SK-N-SH (cell line): ENCODE measurements at regions of chr7 and their contacts with region 1.

Region 1: DNA sequence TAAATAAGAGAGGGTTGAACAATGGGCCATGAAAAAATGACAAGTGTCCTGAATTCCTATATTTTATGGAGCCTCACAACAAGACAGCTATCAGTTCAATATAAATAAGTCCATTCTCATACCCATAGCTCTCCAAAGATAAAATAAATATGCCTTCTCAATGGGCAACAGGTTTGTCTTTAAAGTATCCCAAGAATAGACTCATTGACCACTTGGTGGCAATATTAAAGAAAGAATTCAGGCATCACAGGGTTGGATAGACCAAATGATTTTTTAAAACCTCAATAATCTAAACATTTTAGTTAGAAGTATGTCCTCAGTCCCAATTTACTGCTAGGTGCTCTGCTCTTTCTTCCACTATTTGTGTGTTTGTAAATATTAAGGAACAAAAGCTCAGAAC is 165.1 kb upstream of the WNT16 start:
- DNase-seq: no peak
- H3K4me3 ChIP-seq: no peak overlapping the region
- H3K27ac ChIP-seq: no peak overlapping the region
- H3K4me1 ChIP-seq: peaks cover 0 to 18% of the 10 kb centered on the region in 2 experiments; a peak in 2 of 4 replicates
- H3K27me3 ChIP-seq: no peaks in the 10 kb centered on the region
- CTCF ChIP-seq: no peak
- EP300 ChIP-seq: no peak
- RAD21 ChIP-seq: peak; percentile 45

Region 2: DNA sequence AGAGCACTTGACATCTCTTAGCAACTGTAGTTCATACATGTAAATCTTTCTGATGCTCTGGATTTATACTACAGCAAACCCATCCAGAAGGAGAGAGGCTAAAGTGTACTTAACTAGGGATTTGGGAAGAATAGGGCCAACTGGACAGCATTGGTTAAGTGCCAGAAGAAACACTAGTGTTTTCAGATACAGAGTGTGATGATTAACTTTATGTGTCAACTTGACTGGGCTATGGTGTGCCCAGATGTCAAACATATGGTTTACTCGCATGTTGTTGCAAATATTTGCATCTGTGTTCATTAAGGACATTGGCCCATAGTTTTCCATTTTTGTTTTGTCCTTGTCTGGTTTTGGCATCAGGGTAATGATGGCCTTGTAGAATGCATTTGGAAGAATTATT is 1275.4 kb before region 1 on chr7:
- CTCF ChIA-PET with region 1: no interaction called
- POLR2A ChIA-PET with region 1: no interaction called
- DNase-seq: no peak
- H3K4me3 ChIP-seq: no peak overlapping the region
- H3K27ac ChIP-seq: no peak overlapping the region
- H3K4me1 ChIP-seq: no peaks in the 10 kb centered on the region; a peak in 1 of 4 replicates
- H3K27me3 ChIP-seq: no peaks in the 10 kb centered on the region; the same call in 1 of the 2 replicates
- CTCF ChIP-seq: no peak
- EP300 ChIP-seq: no peak
- RAD21 ChIP-seq: no peak

Region 3: GRCh38 chr7:121337398-121337797 is 173.7 kb after region 1 on chr7:
- CTCF ChIA-PET with region 1: interaction called, 20 read pairs
- POLR2A ChIA-PET with region 1: no interaction called
- DNase-seq: peak; percentile 50
- H3K4me3 ChIP-seq: no peak overlapping the region
- H3K27ac ChIP-seq: no peak overlapping the region
- H3K4me1 ChIP-seq: peaks cover 0 to 7% of the 10 kb centered on the region in 2 experiments; a peak in 1 of 4 replicates
- H3K27me3 ChIP-seq: peaks cover 1% of the 10 kb centered on the region; the same call in 1 of the 2 replicates
- CTCF ChIP-seq: peak; percentile 48
- EP300 ChIP-seq: no peak
- RAD21 ChIP-seq: peak; percentile 94